WTC11 (cell line): ENCODE measurements at regions of chr12 and their contacts with region 1.

Region 1: GRCh38 chr12:120971299-120972179 is 6.8 kb upstream of the HNF1A start:
- DNase-seq: no peak
- ATAC-seq: peak; percentile 43; the same call in 1 of the 2 replicates
- H3K4me3 Mint-ChIP-seq: no peak overlapping the region
- H3K27ac Mint-ChIP-seq: peak overlapping the region; percentile 88
- H3K4me1 Mint-ChIP-seq: peaks cover 17% of the 10 kb centered on the region
- H3K27me3 Mint-ChIP-seq: no peaks in the 10 kb centered on the region
- CTCF ChIP-seq: peak; percentile 24; the same call in 1 of the 2 replicates

Region 2: GRCh38 chr12:120580787-120581723 is 390.5 kb before region 1 on chr12 and contains the start of gene POP5:
- CTCF ChIA-PET with region 1: interaction called, 11 read pairs
- POLR2A ChIA-PET with region 1: no interaction called
- DNase-seq: peak; percentile 98
- ATAC-seq: peak; percentile 91
- H3K4me3 Mint-ChIP-seq: peak within 1 kb of the TSS; percentile 100
- H3K27ac Mint-ChIP-seq: peak within 1 kb of the TSS; percentile 95
- H3K4me1 Mint-ChIP-seq: peaks cover 24% of the 10 kb centered on the region
- H3K27me3 Mint-ChIP-seq: peaks cover 12% of the 10 kb centered on the region
- CTCF ChIP-seq: no peak
- total RNA-seq, gene POP5: 53.9 to 57.7 TPM (median 54.7 TPM) in 3 replicates

Region 3: DNA sequence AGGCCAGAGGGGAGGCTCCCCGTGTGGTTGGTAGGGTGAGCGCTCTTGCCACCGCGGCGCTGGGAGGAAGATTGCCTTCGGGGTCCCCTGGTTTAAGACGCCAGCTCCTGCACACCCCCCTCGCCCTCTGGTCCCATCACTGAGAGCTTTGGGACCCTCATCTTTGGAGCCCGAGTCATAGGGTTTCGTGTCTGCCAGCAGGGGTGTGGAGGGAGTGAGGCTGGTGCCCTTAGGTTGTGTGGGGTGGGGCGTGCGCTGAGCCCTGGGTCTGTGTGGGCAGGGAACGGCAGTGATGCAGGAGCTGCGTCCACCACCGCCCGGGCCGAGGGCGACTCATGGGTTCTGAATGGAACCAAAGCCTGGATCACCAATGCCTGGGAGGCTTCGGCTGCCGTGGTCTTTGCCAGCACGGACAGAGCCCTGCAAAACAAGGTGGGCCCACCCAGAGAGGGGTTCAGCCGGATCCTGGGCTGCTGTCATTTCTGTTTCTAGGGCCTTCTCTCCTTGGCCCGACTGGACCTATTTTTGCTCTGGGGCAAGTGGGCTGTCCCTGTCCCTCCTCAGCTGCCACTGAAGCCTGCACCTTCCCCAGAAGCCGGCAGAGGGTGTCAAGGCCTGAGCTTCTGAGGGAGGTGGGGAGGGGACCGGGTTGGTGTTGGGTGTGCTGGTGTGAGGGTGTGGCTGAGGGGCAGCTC is 233.8 kb before region 1 on chr12:
- CTCF ChIA-PET with region 1: interaction called, 32 read pairs
- POLR2A ChIA-PET with region 1: no interaction called
- DNase-seq: peak; percentile 69
- ATAC-seq: peak; percentile 92
- H3K4me3 Mint-ChIP-seq: no peak overlapping the region
- H3K27ac Mint-ChIP-seq: no peak overlapping the region
- H3K4me1 Mint-ChIP-seq: no peaks in the 10 kb centered on the region
- H3K27me3 Mint-ChIP-seq: no peaks in the 10 kb centered on the region
- CTCF ChIP-seq: peak; percentile 43; the same call in 1 of the 2 replicates

Region 4: DNA sequence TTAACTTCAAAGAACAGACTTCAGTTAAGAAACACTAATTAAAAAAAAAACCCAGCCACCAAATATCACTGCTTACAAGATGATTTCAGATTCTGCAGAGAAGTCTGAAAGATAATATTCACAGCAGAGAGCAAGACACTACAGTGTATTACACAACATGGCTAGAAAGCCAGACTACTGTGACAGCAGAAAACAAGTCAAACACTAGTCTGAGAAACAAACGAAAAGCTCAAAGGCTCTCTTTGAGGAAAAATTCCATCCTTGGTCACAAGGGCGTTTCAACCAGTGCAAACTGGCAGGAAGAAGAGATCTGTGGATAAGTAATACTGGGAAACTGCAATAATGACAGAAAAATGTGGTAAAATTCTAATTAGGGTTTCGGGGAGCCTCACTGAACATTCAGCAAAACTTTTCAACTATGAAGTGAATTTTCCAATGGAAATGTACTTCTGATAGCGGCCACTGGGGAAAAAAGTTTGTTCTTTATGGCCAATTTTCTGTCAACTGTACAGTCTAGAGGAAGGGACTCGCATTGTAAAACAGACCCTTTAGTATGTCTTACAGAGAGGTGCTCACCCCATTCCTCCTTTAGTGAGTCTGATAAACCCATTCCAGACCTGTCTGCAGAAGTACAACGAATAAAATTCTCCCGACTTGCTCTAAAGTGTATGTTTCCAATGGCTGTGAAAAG is 195.5 kb before region 1 on chr12:
- CTCF ChIA-PET with region 1: interaction called, 11 read pairs
- POLR2A ChIA-PET with region 1: no interaction called
- DNase-seq: no peak
- ATAC-seq: no peak
- H3K4me3 Mint-ChIP-seq: no peak overlapping the region
- H3K27ac Mint-ChIP-seq: peak overlapping the region; percentile 39; the same call in 1 of the 2 replicates
- H3K4me1 Mint-ChIP-seq: peaks cover 12% of the 10 kb centered on the region
- H3K27me3 Mint-ChIP-seq: no peaks in the 10 kb centered on the region
- CTCF ChIP-seq: no peak

Region 5: GRCh38 chr12:120856980-120857379 is 114.6 kb before region 1 on chr12:
- CTCF ChIA-PET with region 1: interaction called, 12 read pairs
- POLR2A ChIA-PET with region 1: no interaction called
- DNase-seq: no peak
- ATAC-seq: no peak
- H3K4me3 Mint-ChIP-seq: no peak overlapping the region
- H3K27ac Mint-ChIP-seq: no peak overlapping the region
- H3K4me1 Mint-ChIP-seq: peaks cover 10% of the 10 kb centered on the region
- H3K27me3 Mint-ChIP-seq: no peaks in the 10 kb centered on the region
- CTCF ChIP-seq: no peak

Region 6: GRCh38 chr12:120904197-120904773 is 67.3 kb before region 1 on chr12 and contains the start of gene SPPL3:
- CTCF ChIA-PET with region 1: interaction called, 12 read pairs
- POLR2A ChIA-PET with region 1: no interaction called
- DNase-seq: peak; percentile 94
- ATAC-seq: peak; percentile 91
- H3K4me3 Mint-ChIP-seq: peak within 1 kb of the TSS; percentile 99
- H3K27ac Mint-ChIP-seq: peak within 1 kb of the TSS; percentile 86
- H3K4me1 Mint-ChIP-seq: peaks cover 22% of the 10 kb centered on the region
- H3K27me3 Mint-ChIP-seq: no peaks in the 10 kb centered on the region
- CTCF ChIP-seq: no peak
- total RNA-seq, gene SPPL3: 32.5 to 35.5 TPM (median 33.8 TPM) in 3 replicates

Region 7: DNA sequence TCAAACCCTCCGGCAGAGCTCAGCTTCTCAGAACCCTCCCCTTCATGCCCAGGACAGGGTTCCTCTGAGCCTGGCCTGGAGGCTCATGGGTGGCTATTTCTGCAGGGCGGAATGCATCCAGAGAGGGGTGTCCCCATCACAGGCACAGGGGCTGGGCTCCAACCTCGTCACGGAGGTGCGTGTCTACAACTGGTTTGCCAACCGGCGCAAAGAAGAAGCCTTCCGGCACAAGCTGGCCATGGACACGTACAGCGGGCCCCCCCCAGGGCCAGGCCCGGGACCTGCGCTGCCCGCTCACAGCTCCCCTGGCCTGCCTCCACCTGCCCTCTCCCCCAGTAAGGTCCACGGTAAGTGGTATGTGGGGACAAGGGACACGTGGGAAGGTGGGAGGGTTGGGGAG is 22.5 kb after region 1 on chr12:
- CTCF ChIA-PET with region 1: interaction called, 17 read pairs
- POLR2A ChIA-PET with region 1: no interaction called
- DNase-seq: no peak
- ATAC-seq: no peak
- H3K4me3 Mint-ChIP-seq: no peak overlapping the region
- H3K27ac Mint-ChIP-seq: no peak overlapping the region
- H3K4me1 Mint-ChIP-seq: peaks cover 2% of the 10 kb centered on the region
- H3K27me3 Mint-ChIP-seq: peaks cover 5% of the 10 kb centered on the region; the same call in 1 of the 2 replicates
- CTCF ChIP-seq: no peak